A673 (cell line): ENCODE measurements at regions of chr11 and their contacts with region 1.

Region 1: DNA sequence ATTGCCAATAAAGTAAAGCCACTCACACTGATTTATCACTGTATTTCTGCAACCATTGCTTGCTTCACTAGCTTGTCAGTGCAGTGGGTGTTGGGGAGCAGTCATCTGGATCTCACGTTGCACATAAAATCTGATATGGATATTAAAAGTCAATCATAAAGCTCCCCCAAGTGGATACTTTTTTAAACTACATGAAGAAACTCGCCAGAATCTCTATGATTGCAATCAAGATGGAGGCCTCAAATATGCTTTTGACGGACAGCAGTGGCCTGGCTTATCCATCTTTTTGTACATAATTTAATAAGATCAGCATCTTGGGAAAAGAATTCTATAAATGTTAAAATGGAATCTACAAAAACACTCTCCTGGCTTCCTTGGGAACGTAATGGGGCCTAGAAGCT is 137.7 kb downstream of the WT1 start:
- DNase-seq: peak; percentile 90
- H3K4me3 ChIP-seq: no peak overlapping the region
- H3K27ac ChIP-seq: no peak overlapping the region
- H3K4me1 ChIP-seq: no peaks in the 10 kb centered on the region
- H3K27me3 ChIP-seq: no peaks in the 10 kb centered on the region
- CTCF ChIP-seq: peak; percentile 88

Region 2: GRCh38 chr11:31487848-31488247 is 809.8 kb before region 1 on chr11:
- CTCF ChIA-PET with region 1: no interaction called
- POLR2A ChIA-PET with region 1: no interaction called
- intact Hi-C with region 1: loop called (anchors 10 kb)
- DNase-seq: peak; percentile 91
- H3K4me3 ChIP-seq: no peak overlapping the region
- H3K27ac ChIP-seq: no peak overlapping the region
- H3K4me1 ChIP-seq: peaks cover 6% of the 10 kb centered on the region
- H3K27me3 ChIP-seq: no peaks in the 10 kb centered on the region
- CTCF ChIP-seq: peak; percentile 92

Region 3: DNA sequence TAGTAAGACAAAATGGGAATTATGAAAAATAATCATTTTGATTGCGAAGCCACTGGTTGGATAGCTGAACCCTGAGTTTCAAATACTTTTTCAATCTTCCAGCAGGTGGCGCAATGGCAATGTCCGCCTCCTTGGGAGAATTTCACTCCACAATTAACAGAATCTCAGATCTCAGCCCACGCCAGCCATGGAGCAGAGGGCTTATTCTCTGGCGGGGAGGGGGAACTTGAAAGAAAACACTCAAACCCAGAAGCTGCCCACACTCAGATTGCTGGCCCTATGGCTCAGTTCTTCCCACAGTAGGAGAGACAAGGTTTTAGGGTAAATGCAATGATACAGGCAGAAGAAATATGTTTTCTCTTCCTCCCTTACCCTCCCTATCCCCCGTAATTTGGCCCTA is 245.4 kb before region 1 on chr11:
- CTCF ChIA-PET with region 1: interaction called, 9 read pairs
- POLR2A ChIA-PET with region 1: no interaction called
- intact Hi-C with region 1: loop called (anchors 1 kb)
- DNase-seq: peak; percentile 93
- H3K4me3 ChIP-seq: no peak overlapping the region
- H3K27ac ChIP-seq: no peak overlapping the region
- H3K4me1 ChIP-seq: peaks cover 4% of the 10 kb centered on the region
- H3K27me3 ChIP-seq: peaks cover 49% of the 10 kb centered on the region
- CTCF ChIP-seq: peak; percentile 100

Region 4: GRCh38 chr11:32213223-32213622 is 84.4 kb before region 1 on chr11:
- CTCF ChIA-PET with region 1: no interaction called
- POLR2A ChIA-PET with region 1: no interaction called
- intact Hi-C with region 1: no loop called
- DNase-seq: peak; percentile 77
- H3K4me3 ChIP-seq: no peak overlapping the region
- H3K27ac ChIP-seq: no peak overlapping the region
- H3K4me1 ChIP-seq: no peaks in the 10 kb centered on the region
- H3K27me3 ChIP-seq: peaks cover 54% of the 10 kb centered on the region
- CTCF ChIP-seq: no peak

Region 5: DNA sequence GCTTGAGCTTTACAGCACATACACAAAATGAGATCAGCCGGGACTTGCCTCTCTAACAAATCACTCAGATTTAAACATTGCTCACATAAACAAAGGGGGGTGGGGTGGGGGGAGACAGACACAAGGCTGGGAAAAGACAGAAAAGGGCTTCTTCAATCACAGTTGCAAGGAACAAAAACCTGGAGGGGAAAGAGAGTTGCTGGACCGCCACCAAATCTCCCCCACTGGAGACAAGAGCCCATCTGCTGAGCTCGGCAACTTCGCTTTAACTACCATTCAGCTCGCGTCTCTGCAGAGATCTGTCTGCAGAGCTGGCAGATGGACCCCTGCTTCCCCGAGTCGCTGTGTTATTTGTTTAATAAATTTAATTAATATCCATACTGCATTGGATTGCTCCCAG is 41.8 kb before region 1 on chr11:
- CTCF ChIA-PET with region 1: interaction called, 15 read pairs
- POLR2A ChIA-PET with region 1: no interaction called
- intact Hi-C with region 1: no loop called
- DNase-seq: no peak
- H3K4me3 ChIP-seq: no peak overlapping the region
- H3K27ac ChIP-seq: no peak overlapping the region
- H3K4me1 ChIP-seq: peaks cover 7% of the 10 kb centered on the region
- H3K27me3 ChIP-seq: peaks cover 36% of the 10 kb centered on the region
- CTCF ChIP-seq: no peak